ENCODE measurements at regions of chr4 and their contacts with region 1.

Region 1: GRCh38 chr4:150970685-150971151 is 44.4 kb downstream of the LRBA start:
- DNase-seq: no peak
- H3K4me3 ChIP-seq: no peak overlapping the region
- H3K27ac ChIP-seq: no peak overlapping the region
- H3K4me1 ChIP-seq: peaks cover 0 to 32% (median 5%) of the 10 kb centered on the region in 4 experiments
- H3K27me3 ChIP-seq: no peaks in the 10 kb centered on the region

Region 2: DNA sequence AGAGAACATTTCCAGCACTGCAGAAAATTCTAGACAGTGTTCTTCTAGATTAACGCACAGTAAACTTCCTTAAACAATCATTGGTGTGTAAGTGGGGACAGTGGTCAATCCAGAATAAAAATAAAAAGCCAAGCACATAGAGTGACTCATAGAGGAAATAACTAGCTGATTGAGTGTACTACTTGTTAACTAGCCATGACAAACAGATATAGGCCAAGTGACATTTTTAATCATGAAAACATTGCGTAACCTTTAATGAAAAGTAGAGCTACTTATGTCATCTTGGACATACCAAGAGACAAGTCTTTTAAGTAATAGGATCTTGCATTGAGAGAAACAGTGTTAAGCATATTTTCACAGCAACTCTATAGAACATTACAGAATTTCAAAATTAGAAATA is 622.6 kb before region 1 on chr4:
- CTCF ChIA-PET with region 1: no interaction called
- POLR2A ChIA-PET with region 1: no interaction called
- DNase-seq: peak; percentile 31 to 83 (median 59)
- H3K4me3 ChIP-seq: no peak overlapping the region
- H3K27ac ChIP-seq: no peak overlapping the region
- H3K4me1 ChIP-seq: peaks cover 2 to 4% (median 3%) of the 10 kb centered on the region in 4 experiments
- H3K27me3 ChIP-seq: no peaks in the 10 kb centered on the region

Region 3: DNA sequence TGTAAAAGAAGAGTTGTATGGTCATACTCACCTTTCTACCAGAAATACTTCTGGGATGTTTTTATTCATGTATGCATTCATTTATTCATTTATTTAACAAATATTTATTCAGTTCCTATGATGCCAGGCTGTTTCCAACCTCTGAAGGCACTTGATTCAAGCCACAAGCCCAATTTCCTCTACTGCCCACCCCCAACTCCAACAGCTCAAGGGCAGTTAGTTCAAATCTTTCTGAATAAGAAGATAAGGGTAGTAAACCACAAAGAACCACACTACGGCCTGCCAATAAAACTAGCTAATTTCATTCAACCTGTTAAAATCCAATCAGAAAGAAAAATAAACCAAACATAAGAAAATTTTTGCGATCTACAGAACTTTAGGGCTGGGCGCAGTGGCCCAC is 13.1 kb after region 1 on chr4:
- CTCF ChIA-PET with region 1: interaction called, 10 read pairs
- POLR2A ChIA-PET with region 1: no interaction called
- DNase-seq: peak; percentile 25 to 85 (median 73)
- H3K4me3 ChIP-seq: no peak overlapping the region
- H3K27ac ChIP-seq: no peak overlapping the region
- H3K4me1 ChIP-seq: peaks cover 0 to 23% (median 6%) of the 10 kb centered on the region in 4 experiments
- H3K27me3 ChIP-seq: no peaks in the 10 kb centered on the region